ENCODE measurements at regions of chr20 and their contacts with region 1.

Region 1: DNA sequence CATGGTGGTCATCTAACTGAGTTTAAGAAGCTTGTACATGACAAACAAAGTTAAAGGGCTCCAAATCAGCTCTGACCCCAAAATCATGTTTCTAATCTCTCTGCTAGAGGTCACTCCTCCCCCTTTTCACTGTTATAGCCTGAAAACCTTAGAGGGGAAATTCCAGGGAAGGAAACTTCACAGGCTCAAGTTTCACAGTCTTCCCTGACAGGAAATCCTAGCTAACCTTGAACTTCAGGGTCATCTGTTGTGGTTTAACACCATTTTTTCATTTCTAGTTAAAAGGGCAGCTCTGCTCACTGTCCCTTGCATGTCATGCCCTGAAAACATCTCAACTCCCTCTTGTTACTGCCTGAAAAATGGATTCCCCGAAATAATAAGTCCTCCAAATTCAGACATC is 104.4 kb upstream of the BMP2 start:
- DNase-seq: no peak
- CTCF ChIP-seq: no peak

Region 2: DNA sequence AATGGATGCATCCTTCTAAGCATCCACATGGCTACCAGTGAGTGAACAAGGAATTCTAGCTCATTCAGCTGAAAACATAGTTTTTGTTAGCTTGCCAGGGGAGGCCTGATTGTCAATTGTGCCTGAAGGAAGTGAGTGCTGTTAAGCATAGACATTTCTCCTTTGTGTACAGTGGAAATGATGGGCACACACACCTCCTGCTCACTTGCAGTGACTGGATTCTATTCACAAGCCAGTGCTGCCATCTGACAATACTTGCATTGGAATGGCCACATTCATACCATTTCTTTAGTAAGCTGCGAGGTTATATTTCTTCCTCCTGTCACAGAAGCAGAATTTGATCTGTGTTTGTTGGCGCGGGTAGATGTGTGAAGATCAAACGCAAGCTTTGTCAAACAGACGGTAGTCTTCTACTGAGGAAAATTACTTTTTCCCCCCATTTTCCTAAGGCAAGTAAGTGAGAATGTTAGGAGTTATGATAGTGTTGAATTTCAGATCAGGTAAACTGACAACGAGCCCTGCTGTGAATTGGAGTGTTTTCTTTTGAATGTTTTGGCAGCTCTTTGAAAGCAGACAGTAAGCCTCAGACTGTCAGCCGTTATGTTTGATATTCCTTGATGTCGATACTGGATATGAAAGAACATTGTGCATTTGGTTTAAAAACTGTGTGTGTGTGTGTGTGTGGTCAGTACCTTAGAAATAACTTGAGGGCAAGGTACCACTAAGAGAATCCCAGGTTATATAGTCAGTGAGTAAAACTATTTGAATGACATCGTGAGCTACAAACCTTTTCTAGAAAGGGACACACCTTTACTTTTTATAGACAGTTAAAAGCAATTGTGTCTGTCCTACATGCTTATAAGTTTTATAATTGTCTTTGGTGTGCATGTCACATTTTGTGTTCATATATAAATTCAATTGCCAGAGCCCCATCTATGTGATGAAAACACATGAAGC is 20.2 kb after region 1 on chr20:
- CTCF ChIA-PET with region 1: interaction called, 10 read pairs
- POLR2A ChIA-PET with region 1: no interaction called
- DNase-seq: no peak
- CTCF ChIP-seq: no peak

Region 3: GRCh38 chr20:6704132-6704861 is 41.2 kb after region 1 on chr20:
- CTCF ChIA-PET with region 1: no interaction called
- POLR2A ChIA-PET with region 1: no interaction called
- DNase-seq: no peak
- CTCF ChIP-seq: no peak